Astrocyte of the cerebellum (primary cell): ENCODE measurements at regions of chr11 and their contacts with region 1.

Region 1: GRCh38 chr11:43708776-43709175 is 28.2 kb downstream of the HSD17B12 start:
- DNase-seq: no peak
- H3K4me3 ChIP-seq: no peak overlapping the region
- CTCF ChIP-seq: no peak

Region 2: DNA sequence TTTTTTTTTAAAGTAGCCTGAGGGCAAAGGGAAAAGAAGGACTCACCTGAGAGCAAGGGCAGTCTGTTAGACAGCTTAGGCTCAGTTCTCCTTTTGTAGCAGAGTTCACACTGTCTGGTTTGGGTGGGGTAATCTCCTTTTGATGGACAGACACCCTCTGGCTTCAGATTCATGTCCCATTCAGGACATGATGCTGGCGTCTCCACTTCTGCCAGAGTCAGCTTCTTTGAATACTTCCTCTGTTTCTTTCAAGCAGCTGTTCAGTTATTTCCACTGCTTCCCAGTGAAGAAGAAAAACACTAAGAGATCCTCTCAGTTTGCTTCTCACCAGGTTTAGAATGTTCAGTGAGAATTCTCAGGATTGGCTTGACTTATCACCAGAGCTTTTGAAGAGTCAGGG is 107.3 kb before region 1 on chr11:
- in situ Hi-C with region 1: no loop called
- DNase-seq: no peak
- H3K4me3 ChIP-seq: no peak overlapping the region
- CTCF ChIP-seq: no peak

Region 3: DNA sequence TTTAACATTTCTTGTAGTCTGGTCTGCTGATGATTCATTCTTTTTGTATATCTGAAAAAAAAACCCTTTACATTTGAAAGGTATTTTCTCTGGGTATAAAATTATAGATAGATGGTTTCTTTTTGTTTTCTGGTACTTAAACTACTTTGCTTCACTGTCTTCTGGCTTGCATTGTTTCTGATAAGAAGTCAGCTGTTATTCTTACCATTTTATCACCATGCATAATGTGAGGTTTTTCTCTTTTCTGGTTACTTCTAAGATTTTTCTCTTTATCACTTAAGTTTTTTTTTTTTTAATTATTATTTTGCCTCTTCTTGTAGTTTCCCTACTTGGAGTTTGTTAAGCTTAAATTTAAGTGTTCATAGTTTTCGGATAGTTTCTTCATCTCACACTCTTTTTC is 56.4 kb after region 1 on chr11:
- in situ Hi-C with region 1: loop called (anchors 10 kb)
- DNase-seq: no peak
- H3K4me3 ChIP-seq: no peak overlapping the region
- CTCF ChIP-seq: no peak